ENCODE measurements at regions of chr2 and their contacts with region 1.

Region 1: DNA sequence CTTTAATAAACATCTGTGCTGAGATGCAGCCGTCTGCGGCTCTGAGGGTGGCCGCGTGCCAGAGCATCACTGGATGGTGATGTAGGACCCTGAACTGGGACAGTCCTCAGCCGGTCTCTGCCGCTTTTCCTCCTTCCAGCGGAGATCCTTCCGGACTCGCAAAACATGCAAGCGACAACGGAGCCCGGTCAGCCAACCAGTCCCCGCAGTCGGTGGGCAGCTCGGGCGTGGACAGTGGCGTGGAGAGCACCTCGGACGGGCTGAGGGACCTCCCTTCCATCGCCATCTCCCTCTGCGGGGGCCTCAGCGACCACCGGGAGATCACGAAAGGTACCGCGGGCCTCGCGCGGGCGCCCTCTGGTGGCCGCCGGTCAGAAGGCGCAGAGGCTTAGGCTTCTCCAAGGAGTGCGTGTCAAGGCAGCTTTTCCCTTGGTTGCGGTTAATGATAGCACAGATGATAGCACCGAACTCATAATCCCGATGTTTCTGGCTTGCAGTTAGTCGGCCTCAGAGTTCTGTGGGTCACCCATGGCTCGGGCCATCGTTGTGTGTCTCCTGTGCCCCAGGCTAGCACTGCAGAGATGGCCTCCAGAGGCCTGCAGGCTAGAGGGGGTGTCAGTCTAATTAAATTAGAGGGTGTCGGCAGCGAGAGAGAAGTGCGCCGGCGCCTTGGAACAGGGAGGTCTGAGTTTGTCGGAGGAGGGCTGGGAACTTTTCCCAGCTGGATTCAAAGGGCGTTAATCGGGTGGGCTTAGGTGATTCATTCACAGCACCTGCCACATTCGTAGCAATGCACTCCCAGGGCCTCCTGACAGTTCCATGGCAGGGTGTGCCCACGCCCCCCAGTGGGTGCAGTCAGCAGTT is 38.5 kb downstream of the LPIN1 start:
- DNase-seq: peak; percentile 59
- ATAC-seq: peak; percentile 67
- H3K4me3 Mint-ChIP-seq: no peak overlapping the region
- H3K27ac Mint-ChIP-seq: no peak overlapping the region
- H3K4me1 Mint-ChIP-seq: no peaks in the 10 kb centered on the region
- H3K27me3 Mint-ChIP-seq: no peaks in the 10 kb centered on the region

Region 2: DNA sequence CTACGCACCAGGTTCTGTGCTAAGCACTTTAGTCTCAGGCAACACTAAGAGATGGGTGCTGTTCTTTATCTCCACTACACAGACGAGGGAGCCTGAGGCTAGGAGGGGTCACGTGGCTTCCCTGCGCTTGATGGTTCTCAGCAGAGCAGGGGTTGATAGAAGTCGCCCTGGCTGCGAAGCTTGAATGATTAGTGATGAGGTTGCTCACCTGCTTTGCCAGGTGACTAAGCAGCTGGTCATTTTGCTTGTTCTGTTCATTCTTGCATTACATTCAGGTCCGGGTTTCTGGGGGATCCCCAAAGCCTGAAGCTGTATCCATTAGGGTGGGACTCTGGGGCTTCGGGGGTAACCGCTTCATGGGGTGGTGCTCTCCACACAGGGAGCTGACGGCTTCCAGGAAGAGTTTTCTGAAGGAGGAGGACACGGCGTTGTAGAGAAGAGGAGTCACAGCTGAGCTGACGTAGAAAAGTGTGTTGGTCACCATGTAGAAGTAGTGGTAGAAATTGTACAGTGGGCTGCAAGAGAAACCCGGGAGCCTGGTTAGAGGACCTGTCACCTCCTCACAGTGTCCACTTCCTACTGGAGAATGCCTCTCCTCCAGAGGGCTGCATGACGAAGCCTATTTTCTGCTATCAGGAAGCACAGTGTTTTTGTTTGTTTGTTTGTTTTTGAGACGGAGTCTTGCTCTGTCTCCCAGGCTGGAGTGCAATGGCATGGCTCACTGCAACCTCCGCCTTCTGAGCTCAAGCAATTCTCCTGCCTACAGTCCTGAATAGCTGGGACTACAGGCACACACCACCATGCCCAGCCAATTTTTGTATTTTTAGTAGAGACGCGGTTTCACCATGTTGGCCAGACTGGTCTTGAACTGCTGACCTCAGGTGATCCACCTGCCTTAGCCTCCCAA is 126.5 kb before region 1 on chr2:
- CTCF ChIA-PET with region 1: no interaction called
- POLR2A ChIA-PET with region 1: no interaction called
- DNase-seq: no peak
- ATAC-seq: no peak
- H3K4me3 Mint-ChIP-seq: no peak overlapping the region
- H3K27ac Mint-ChIP-seq: no peak overlapping the region
- H3K4me1 Mint-ChIP-seq: no peaks in the 10 kb centered on the region
- H3K27me3 Mint-ChIP-seq: no peaks in the 10 kb centered on the region

Region 3: GRCh38 chr2:11688222-11689069 is 96.5 kb before region 1 on chr2:
- CTCF ChIA-PET with region 1: interaction called, 138 read pairs
- POLR2A ChIA-PET with region 1: no interaction called
- DNase-seq: peak; percentile 94
- ATAC-seq: peak; percentile 98
- H3K4me3 Mint-ChIP-seq: peak overlapping the region; percentile 58
- H3K27ac Mint-ChIP-seq: peak overlapping the region; percentile 72
- H3K4me1 Mint-ChIP-seq: peaks cover 21% of the 10 kb centered on the region
- H3K27me3 Mint-ChIP-seq: peaks cover 15% of the 10 kb centered on the region

Region 4: GRCh38 chr2:11738589-11739436 is 46.2 kb before region 1 on chr2:
- CTCF ChIA-PET with region 1: interaction called, 251 read pairs
- POLR2A ChIA-PET with region 1: no interaction called
- DNase-seq: peak; percentile 46
- ATAC-seq: peak; percentile 80
- H3K4me3 Mint-ChIP-seq: no peak overlapping the region
- H3K27ac Mint-ChIP-seq: no peak overlapping the region
- H3K4me1 Mint-ChIP-seq: peaks cover 14% of the 10 kb centered on the region
- H3K27me3 Mint-ChIP-seq: peaks cover 11% of the 10 kb centered on the region

Region 5: GRCh38 chr2:11753886-11754699 is 30.9 kb before region 1 on chr2:
- CTCF ChIA-PET with region 1: interaction called, 251 read pairs
- POLR2A ChIA-PET with region 1: interaction called, 3 read pairs
- DNase-seq: peak; percentile 74
- ATAC-seq: peak; percentile 67
- H3K4me3 Mint-ChIP-seq: peak overlapping the region; percentile 73
- H3K27ac Mint-ChIP-seq: peak overlapping the region; percentile 93
- H3K4me1 Mint-ChIP-seq: peaks cover 93% of the 10 kb centered on the region
- H3K27me3 Mint-ChIP-seq: no peaks in the 10 kb centered on the region

Measured in activated CD8-positive, alpha-beta T cell treated with anti-CD3 and anti-CD28 coated beads, Interleukin-2, amount 10 ng/mL, durations not matched to agents 7 days and 5 days (primary cell).